PC-3 (cell line): ENCODE measurements at regions of chr3 and their contacts with region 1.

Region 1: DNA sequence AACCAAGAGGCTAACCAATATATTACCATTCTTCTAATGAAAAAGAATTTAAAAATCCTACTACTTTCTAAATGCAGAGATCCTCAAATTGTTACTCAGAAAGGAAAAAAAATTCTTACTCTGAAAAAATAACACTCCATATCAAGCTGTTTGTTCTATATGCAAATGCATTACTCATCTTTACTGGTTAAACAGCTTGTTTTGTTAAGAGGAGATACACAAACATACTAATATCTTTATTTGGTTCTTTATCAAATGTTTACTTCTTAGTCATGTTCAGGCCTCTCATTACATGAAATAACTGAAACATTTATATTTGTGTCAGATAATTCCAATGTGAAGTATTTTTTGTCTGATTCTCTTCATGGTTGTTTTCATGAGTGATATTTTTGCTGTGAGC is 146.8 kb downstream of the PCCB start:
- DNase-seq: no peak
- ATAC-seq: peak; percentile 42; the same call in 1 of the 2 replicates
- H3K4me3 ChIP-seq: no peak overlapping the region
- H3K27ac ChIP-seq: no peak overlapping the region
- H3K4me1 ChIP-seq: peaks cover 4% of the 10 kb centered on the region; the same call in 1 of the 2 replicates
- H3K27me3 ChIP-seq: no peaks in the 10 kb centered on the region
- CTCF ChIP-seq: no peak

Region 2: GRCh38 chr3:136473716-136474326 is 76.9 kb after region 1 on chr3:
- CTCF ChIA-PET with region 1: no interaction called
- POLR2A ChIA-PET with region 1: no interaction called
- intact Hi-C with region 1: loop called (anchors 10 kb)
- DNase-seq: peak; percentile 68
- ATAC-seq: peak; percentile 85
- H3K4me3 ChIP-seq: no peak overlapping the region; the same call in 1 of the 2 replicates
- H3K27ac ChIP-seq: peak overlapping the region; percentile 87
- H3K4me1 ChIP-seq: peaks cover 25% of the 10 kb centered on the region
- H3K27me3 ChIP-seq: no peaks in the 10 kb centered on the region
- CTCF ChIP-seq: no peak

Region 3: GRCh38 chr3:136909187-136909586 is 512.3 kb after region 1 on chr3:
- CTCF ChIA-PET with region 1: no interaction called
- POLR2A ChIA-PET with region 1: interaction called, 30 read pairs
- intact Hi-C with region 1: no loop called
- DNase-seq: no peak
- ATAC-seq: no peak
- H3K4me3 ChIP-seq: no peak overlapping the region
- H3K27ac ChIP-seq: no peak overlapping the region
- H3K4me1 ChIP-seq: no peaks in the 10 kb centered on the region
- H3K27me3 ChIP-seq: no peaks in the 10 kb centered on the region
- CTCF ChIP-seq: no peak